Calu3 (cell line): ENCODE measurements at regions of chr11 and their contacts with region 1.

Region 1: GRCh38 chr11:36564376-36565030 is 3.3 kb upstream of the RAG1 start:
- DNase-seq: peak; percentile 40
- H3K4me3 Mint-ChIP-seq: peak overlapping the region; percentile 58
- H3K27ac Mint-ChIP-seq: no peak overlapping the region
- H3K4me1 Mint-ChIP-seq: peaks cover 5% of the 10 kb centered on the region
- H3K27me3 Mint-ChIP-seq: peaks cover 64% of the 10 kb centered on the region
- CTCF ChIP-seq: no peak

Region 2: DNA sequence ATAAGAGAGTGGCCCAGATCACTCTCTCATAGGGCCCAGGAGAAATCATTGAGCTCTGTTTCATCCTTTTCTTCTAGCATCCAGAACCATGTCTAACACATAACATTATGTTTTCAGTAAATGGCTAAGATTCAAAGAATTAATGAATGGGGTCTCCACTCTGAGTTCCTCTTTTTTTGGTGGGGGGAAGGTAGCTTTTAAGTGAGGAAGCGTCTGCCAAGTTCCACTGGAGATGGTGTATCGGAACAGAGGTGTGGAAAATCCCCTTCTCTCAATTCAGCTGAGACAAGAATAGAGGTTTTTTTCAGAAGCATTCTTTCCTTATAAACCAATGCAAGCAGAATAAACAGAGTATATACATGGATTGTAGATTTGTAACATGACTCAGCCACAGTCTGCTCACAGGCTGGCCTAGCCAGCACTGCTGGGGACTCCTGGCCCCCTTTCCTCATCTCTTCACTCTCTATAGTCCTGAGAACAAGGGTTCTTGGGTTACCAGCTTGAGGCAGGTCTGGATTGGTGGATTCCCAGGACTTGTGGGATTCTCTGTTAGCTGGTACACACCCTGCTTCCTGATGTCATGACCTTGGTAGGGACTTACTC is 151.6 kb before region 1 on chr11:
- CTCF ChIA-PET with region 1: no interaction called
- intact Hi-C with region 1: no loop called
- DNase-seq: no peak
- H3K4me3 Mint-ChIP-seq: no peak overlapping the region
- H3K27ac Mint-ChIP-seq: no peak overlapping the region
- H3K4me1 Mint-ChIP-seq: no peaks in the 10 kb centered on the region
- H3K27me3 Mint-ChIP-seq: peaks cover 42% of the 10 kb centered on the region
- CTCF ChIP-seq: no peak

Region 3: GRCh38 chr11:36455658-36456111 is 108.8 kb before region 1 on chr11:
- CTCF ChIA-PET with region 1: no interaction called
- intact Hi-C with region 1: no loop called
- DNase-seq: peak; percentile 20
- H3K4me3 Mint-ChIP-seq: no peak overlapping the region
- H3K27ac Mint-ChIP-seq: no peak overlapping the region
- H3K4me1 Mint-ChIP-seq: peaks cover 35% of the 10 kb centered on the region
- H3K27me3 Mint-ChIP-seq: no peaks in the 10 kb centered on the region
- CTCF ChIP-seq: no peak

Region 4: GRCh38 chr11:36485298-36486002 is 79.1 kb before region 1 on chr11:
- CTCF ChIA-PET with region 1: no interaction called
- intact Hi-C with region 1: no loop called
- DNase-seq: no peak
- H3K4me3 Mint-ChIP-seq: no peak overlapping the region
- H3K27ac Mint-ChIP-seq: no peak overlapping the region
- H3K4me1 Mint-ChIP-seq: no peaks in the 10 kb centered on the region
- H3K27me3 Mint-ChIP-seq: no peaks in the 10 kb centered on the region
- CTCF ChIP-seq: no peak

Region 5: DNA sequence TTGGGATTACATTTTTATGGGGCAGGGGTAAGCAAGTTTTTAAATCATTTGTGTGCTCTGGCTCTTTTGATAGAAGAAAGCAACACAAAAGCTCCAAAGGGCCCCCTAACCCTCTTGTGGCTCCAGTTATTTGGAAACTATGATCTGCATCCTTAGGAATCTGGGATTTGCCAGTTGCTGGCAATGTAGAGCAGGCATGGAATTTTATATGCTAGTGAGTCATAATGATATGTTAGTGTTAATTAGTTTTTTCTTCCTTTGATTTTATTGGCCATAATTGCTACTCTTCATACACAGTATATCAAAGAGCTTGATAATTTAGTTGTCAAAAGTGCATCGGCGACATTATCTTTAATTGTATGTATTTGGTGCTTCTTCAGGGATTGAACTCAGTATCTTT is 13.4 kb after region 1 on chr11:
- CTCF ChIA-PET with region 1: no interaction called
- intact Hi-C with region 1: no loop called
- DNase-seq: no peak
- H3K4me3 Mint-ChIP-seq: no peak overlapping the region
- H3K27ac Mint-ChIP-seq: no peak overlapping the region
- H3K4me1 Mint-ChIP-seq: no peaks in the 10 kb centered on the region
- H3K27me3 Mint-ChIP-seq: peaks cover 34% of the 10 kb centered on the region
- CTCF ChIP-seq: no peak

Region 6: DNA sequence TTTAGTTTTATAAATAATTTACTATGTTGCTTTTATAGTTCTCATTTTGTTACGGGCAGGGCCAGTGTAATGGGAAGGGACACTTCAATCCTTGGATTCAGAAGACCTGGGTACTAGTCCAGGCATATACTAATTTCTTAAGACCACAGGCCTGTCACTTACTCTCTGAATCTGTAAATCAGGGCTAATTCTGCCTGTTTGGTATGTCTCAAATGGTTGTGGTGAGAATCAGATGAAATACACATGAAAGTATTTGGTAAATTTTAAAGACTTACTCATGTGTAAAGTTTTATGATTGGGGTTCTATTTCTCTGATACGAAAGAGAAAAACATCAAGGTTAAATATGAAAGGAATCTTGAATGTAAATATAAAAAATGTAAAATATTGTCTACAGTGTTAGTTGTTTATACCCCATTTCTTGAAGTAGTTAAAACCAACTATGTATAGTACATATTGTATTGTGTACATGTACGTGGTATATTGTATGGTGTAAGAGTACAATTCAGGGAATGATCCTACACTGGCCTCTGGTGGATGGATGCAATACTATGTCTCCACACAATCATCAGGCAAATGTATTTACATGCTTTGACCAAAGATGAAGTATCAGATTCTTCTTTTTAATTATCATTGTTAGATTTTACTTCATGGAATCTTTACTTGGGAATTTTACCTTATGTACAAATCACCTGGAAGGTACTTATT is 58.1 kb after region 1 on chr11:
- CTCF ChIA-PET with region 1: no interaction called
- intact Hi-C with region 1: loop called (anchors 1 kb)
- DNase-seq: peak; percentile 6
- H3K4me3 Mint-ChIP-seq: no peak overlapping the region
- H3K27ac Mint-ChIP-seq: no peak overlapping the region
- H3K4me1 Mint-ChIP-seq: no peaks in the 10 kb centered on the region
- H3K27me3 Mint-ChIP-seq: no peaks in the 10 kb centered on the region
- CTCF ChIP-seq: no peak

Region 7: GRCh38 chr11:36672813-36673450 is 108.4 kb after region 1 on chr11:
- CTCF ChIA-PET with region 1: no interaction called
- intact Hi-C with region 1: loop called (anchors 1 kb)
- DNase-seq: peak; percentile 7
- H3K4me3 Mint-ChIP-seq: no peak overlapping the region
- H3K27ac Mint-ChIP-seq: no peak overlapping the region
- H3K4me1 Mint-ChIP-seq: no peaks in the 10 kb centered on the region
- H3K27me3 Mint-ChIP-seq: no peaks in the 10 kb centered on the region
- CTCF ChIP-seq: no peak

Region 8: DNA sequence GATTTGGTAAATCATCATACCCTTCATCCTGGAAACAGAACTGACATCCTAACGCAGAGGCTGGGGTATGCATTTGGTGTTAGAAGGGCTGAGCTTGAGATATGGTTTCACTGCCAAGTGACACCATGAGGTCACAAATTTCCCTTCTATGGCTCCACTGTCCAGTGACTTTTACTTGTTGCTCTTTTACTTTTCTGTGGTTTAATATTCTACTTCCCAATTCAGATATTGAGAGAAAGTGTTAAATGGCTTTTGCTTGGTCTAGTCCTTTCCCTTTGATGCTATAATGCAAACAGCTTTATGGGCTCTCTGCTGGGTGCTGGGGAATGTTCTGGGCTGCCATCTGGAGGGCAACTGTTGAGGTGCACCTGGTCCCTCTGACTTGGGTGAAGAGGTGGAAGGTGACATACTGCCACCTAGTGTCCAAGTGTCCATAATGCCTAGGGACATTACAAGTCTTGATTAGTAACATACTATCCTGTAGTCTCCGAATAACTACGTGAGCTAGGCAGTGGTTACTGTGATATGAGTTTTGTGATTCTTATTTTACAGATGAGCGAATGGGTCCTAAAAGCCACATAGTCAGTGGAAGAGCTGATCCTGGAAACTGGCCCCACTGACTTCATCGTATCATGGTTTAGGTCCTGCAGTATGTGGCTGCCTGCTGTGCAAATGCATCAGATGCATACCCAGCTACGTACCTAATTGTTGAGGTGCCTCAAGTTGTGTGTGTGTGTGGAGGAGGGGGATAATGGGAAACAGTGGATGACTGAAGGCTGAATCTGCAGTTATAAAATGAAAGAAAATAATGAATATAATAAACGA is 182.6 kb after region 1 on chr11:
- CTCF ChIA-PET with region 1: interaction called, 40 read pairs
- intact Hi-C with region 1: loop called (anchors 1 kb)
- DNase-seq: peak; percentile 91
- H3K4me3 Mint-ChIP-seq: no peak overlapping the region
- H3K27ac Mint-ChIP-seq: no peak overlapping the region
- H3K4me1 Mint-ChIP-seq: peaks cover 11% of the 10 kb centered on the region
- H3K27me3 Mint-ChIP-seq: no peaks in the 10 kb centered on the region
- CTCF ChIP-seq: peak; percentile 95